Activated naive CD4-positive, alpha-beta T cell treated with anti-CD3 and anti-CD28 coated beads for 36 hours (primary cell): ENCODE measurements at regions of chr6 and their contacts with region 1.

Region 1: GRCh38 chr6:136550330-136551071 is at the start of gene MAP7:
- DNase-seq: peak; percentile 76
- H3K4me3 Mint-ChIP-seq: peak within 1 kb of the TSS; percentile 54
- H3K27ac Mint-ChIP-seq: no peak within 1 kb of the TSS
- H3K4me1 Mint-ChIP-seq: peaks cover 4% of the 10 kb centered on the region
- H3K27me3 Mint-ChIP-seq: peaks cover 38% of the 10 kb centered on the region
- total RNA-seq, gene MAP7: 1.1 to 1.3 TPM

Region 2: GRCh38 chr6:135506270-135506997 is 1044.1 kb before region 1 on chr6:
- CTCF ChIA-PET with region 1: no interaction called
- intact Hi-C with region 1: loop called (anchors 10 kb)
- DNase-seq: peak; percentile 12
- H3K4me3 Mint-ChIP-seq: no peak overlapping the region
- H3K27ac Mint-ChIP-seq: no peak overlapping the region
- H3K4me1 Mint-ChIP-seq: peaks cover 2% of the 10 kb centered on the region
- H3K27me3 Mint-ChIP-seq: no peaks in the 10 kb centered on the region

Region 3: GRCh38 chr6:136249811-136250685 is 300.5 kb before region 1 on chr6 and contains the start of gene MTFR2:
- CTCF ChIA-PET with region 1: interaction called, 3 read pairs
- intact Hi-C with region 1: loop called (anchors 10 kb)
- DNase-seq: peak; percentile 97
- H3K4me3 Mint-ChIP-seq: peak within 1 kb of the TSS; percentile 95
- H3K27ac Mint-ChIP-seq: peak within 1 kb of the TSS; percentile 85
- H3K4me1 Mint-ChIP-seq: peaks cover 45% of the 10 kb centered on the region
- H3K27me3 Mint-ChIP-seq: no peaks in the 10 kb centered on the region
- total RNA-seq, gene MTFR2: 19.2 to 22.1 TPM

Region 4: GRCh38 chr6:136378886-136379285 is 171.6 kb before region 1 on chr6:
- CTCF ChIA-PET with region 1: interaction called, 3 read pairs
- intact Hi-C with region 1: loop called (anchors 2 kb)
- DNase-seq: no peak
- H3K4me3 Mint-ChIP-seq: no peak overlapping the region
- H3K27ac Mint-ChIP-seq: no peak overlapping the region
- H3K4me1 Mint-ChIP-seq: no peaks in the 10 kb centered on the region
- H3K27me3 Mint-ChIP-seq: no peaks in the 10 kb centered on the region

Region 5: DNA sequence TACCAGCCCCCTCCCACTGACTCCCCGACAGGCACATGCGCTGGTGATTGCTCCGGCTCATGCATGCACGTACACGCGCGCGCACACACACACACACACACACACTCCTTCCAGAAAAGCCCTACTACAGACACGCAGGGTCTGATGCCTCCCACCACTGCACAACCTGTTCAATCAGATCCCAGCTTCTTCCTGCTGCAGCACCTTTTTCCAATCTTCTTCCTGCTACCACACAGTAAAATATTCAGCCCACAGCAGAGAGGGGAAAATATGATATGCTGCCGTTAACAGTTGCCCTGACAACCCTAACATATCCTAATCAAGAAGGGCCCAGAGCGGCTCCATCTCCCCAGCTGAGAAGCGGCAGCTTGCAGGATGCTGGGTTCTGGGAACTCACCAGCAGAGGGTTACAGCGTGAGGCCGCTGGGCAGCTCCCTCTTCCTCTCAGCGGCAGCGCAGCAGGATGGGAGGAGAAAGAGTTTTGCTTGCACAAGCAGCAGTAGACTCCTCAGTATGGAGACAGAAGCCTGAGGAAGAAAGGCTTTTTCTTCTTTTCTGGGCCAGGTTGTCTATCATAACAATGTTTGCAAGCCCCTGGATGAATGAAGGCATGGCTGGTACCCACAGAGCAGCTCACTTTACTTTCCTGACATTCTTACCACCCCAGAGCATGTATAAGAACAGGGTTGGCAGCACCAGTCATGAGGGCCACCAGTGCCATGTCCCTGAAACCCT is 24.1 kb before region 1 on chr6:
- CTCF ChIA-PET with region 1: interaction called, 5 read pairs
- intact Hi-C with region 1: loop called (anchors 1 kb)
- DNase-seq: peak; percentile 73
- H3K4me3 Mint-ChIP-seq: peak overlapping the region; percentile 61
- H3K27ac Mint-ChIP-seq: peak overlapping the region; percentile 44
- H3K4me1 Mint-ChIP-seq: peaks cover 23% of the 10 kb centered on the region
- H3K27me3 Mint-ChIP-seq: peaks cover 10% of the 10 kb centered on the region

Region 6: DNA sequence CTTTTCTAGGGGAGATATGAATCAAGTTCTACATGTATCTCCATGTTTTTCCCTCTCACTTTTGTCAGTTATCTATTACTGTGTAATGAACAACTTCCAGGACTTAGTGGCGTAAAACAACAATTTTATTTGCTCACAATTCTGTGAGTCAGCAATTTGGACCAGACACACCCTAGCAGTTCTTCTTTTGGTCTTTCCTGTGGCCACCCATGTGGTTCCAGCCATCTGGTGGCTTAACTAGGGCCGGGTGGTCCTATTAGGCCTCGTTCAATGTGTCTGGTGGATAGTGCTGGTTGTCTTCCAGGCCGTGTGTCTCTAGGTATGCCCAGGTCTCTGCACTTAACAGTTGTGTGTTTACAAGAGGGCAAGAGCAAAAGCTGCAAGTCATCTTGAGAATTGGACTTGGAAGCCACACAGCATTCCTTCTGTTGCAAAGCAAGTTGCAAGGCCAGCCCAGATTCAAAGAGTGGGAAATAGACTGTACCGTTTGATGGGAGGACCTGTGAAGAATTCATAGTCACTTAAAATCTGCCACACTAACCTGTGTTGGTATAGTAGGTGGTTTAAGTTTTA is 350.8 kb after region 1 on chr6:
- CTCF ChIA-PET with region 1: no interaction called
- intact Hi-C with region 1: no loop called
- DNase-seq: no peak
- H3K4me3 Mint-ChIP-seq: no peak overlapping the region
- H3K27ac Mint-ChIP-seq: no peak overlapping the region
- H3K4me1 Mint-ChIP-seq: no peaks in the 10 kb centered on the region
- H3K27me3 Mint-ChIP-seq: no peaks in the 10 kb centered on the region